ENCODE measurements at regions of chr7 and their contacts with region 1.

Region 1: DNA sequence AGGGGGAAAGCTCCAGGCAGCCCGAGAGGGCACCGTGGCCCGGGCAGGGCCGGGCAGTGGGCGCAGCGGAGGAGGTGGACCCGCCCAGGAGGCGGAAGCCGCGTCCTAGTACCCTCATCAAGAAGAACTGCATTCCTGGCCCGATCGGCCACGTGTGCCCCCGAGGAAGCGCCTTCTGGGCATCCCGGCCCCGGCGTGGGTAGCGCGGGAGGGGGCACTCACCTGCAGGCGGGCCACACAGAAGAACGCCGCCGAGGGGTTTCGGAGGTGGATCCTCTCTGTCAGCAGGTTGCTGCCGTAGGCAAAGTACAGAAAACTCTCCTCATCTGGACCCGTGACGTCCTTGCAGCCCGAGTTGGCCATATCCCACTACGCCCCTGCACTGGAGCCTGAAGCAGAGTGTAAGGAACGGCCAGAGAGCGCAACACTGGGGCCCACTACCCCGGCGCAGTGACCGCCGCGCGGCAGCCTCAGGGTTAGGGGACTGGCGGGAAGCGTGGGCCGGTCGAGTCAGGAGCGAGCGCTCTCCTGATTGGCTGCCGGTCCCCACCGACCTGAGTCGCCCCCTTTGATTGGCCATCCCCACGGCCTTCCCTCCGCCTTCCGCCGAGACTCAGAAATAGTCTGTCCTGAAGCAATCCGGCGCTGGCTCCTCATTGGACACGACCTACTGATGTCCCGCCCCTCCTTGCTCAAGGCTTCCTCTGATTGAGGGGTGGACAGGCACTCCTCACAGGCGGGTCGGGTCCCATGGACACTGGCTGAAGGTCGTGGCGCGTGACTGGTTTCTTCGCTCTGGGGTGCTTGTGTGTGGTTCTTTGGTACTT is at the start of gene GGCT:
- DNase-seq: peak; percentile 99
- H3K4me3 Mint-ChIP-seq: peak within 1 kb of the TSS; percentile 77
- H3K27ac Mint-ChIP-seq: peak within 1 kb of the TSS; percentile 79
- H3K4me1 Mint-ChIP-seq: peaks cover 38% of the 10 kb centered on the region
- H3K27me3 Mint-ChIP-seq: no peaks in the 10 kb centered on the region
- total RNA-seq, gene GGCT: 60.5 to 68.0 TPM

Region 2: GRCh38 chr7:30214651-30215137 is 289.9 kb before region 1 on chr7:
- CTCF ChIA-PET with region 1: no interaction called
- POLR2A ChIA-PET with region 1: no interaction called
- intact Hi-C with region 1: no loop called
- DNase-seq: no peak
- H3K4me3 Mint-ChIP-seq: no peak overlapping the region
- H3K27ac Mint-ChIP-seq: no peak overlapping the region
- H3K4me1 Mint-ChIP-seq: no peaks in the 10 kb centered on the region
- H3K27me3 Mint-ChIP-seq: peaks cover 8% of the 10 kb centered on the region

Region 3: GRCh38 chr7:30478349-30479201 is 26.0 kb before region 1 on chr7 and contains the start of gene NOD1:
- CTCF ChIA-PET with region 1: interaction called, 5 read pairs
- POLR2A ChIA-PET with region 1: no interaction called
- intact Hi-C with region 1: loop called (anchors 1 kb)
- DNase-seq: peak; percentile 77
- H3K4me3 Mint-ChIP-seq: peak within 1 kb of the TSS; percentile 91
- H3K27ac Mint-ChIP-seq: peak within 1 kb of the TSS; percentile 85
- H3K4me1 Mint-ChIP-seq: peaks cover 51% of the 10 kb centered on the region
- H3K27me3 Mint-ChIP-seq: no peaks in the 10 kb centered on the region
- total RNA-seq, gene NOD1: 12.8 to 14.0 TPM

Region 4: DNA sequence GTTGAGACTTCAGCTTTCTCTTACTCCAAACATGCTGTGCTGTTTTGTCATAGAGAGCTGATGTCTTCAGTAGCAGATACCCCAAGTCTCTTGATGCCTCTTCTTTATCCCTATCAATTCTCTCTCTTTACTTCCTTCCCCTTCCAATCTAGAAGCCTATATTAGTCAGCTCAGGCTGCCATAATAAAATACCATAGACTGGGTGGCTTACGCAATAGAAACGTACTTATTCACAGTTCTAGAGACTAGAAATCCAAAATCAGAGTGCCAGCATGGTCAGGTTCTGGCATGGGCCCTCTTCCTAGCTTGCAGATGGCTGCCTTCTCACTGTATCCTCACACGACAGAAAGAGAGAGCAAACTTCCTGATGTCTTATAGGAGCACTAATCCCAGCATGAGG is 81.1 kb after region 1 on chr7:
- CTCF ChIA-PET with region 1: no interaction called
- POLR2A ChIA-PET with region 1: no interaction called
- intact Hi-C with region 1: no loop called
- DNase-seq: no peak
- H3K4me3 Mint-ChIP-seq: no peak overlapping the region
- H3K27ac Mint-ChIP-seq: no peak overlapping the region
- H3K4me1 Mint-ChIP-seq: peaks cover 1% of the 10 kb centered on the region
- H3K27me3 Mint-ChIP-seq: no peaks in the 10 kb centered on the region

Region 5: DNA sequence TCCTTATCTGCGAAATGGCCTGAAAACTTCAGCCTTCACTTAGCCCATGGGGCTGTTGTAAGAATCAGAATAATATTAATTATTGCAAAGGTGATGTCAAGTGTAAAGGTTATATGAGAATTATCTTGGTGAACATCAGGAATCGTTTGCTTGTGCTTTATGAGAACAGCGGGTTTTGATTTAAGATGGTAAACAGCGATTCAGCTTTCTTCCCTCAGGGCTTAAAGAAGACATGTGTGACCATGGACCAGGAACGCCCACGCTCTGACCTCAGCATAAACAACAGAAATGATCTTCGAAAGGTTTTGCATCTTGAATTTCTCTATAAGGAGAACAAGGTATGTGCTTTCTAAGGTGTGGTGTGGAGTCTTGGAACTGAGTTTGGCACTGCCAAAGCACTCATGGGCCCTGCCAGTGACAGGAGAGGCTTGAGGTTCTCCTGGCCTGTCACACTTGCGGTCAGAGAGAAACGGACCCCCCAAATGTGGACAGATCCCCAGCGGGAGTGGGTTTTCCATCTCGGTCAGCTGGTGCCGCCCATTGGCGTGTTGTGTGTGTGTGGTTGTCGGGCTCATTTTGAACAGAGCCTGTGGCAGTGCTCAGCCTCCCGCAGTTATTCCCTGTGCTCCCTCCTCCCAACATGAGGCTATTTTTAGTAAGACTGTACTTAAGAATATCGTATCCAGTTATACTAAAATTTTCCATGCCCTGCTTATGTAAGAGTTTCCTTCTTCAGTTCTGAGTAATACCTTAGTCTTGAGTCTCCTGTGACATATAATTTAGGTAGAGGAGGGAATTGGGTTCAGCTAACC is 273.9 kb after region 1 on chr7:
- CTCF ChIA-PET with region 1: no interaction called
- POLR2A ChIA-PET with region 1: no interaction called
- intact Hi-C with region 1: no loop called
- DNase-seq: no peak
- H3K4me3 Mint-ChIP-seq: no peak overlapping the region
- H3K27ac Mint-ChIP-seq: no peak overlapping the region
- H3K4me1 Mint-ChIP-seq: no peaks in the 10 kb centered on the region
- H3K27me3 Mint-ChIP-seq: no peaks in the 10 kb centered on the region